Activated CD4-positive, alpha-beta T cell treated with anti-CD3 and anti-CD28 coated beads for 36 hours (primary cell): ENCODE measurements at regions of chr11 and their contacts with region 1.

Region 1: GRCh38 chr11:22703040-22703439 is 36.6 kb downstream of the GAS2 start:
- DNase-seq: peak; percentile 44
- ATAC-seq: peak; percentile 95
- H3K4me3 Mint-ChIP-seq: no peak overlapping the region
- H3K27ac Mint-ChIP-seq: peak overlapping the region; percentile 84
- H3K4me1 Mint-ChIP-seq: peaks cover 22% of the 10 kb centered on the region
- H3K27me3 Mint-ChIP-seq: peaks cover 4% of the 10 kb centered on the region

Region 2: DNA sequence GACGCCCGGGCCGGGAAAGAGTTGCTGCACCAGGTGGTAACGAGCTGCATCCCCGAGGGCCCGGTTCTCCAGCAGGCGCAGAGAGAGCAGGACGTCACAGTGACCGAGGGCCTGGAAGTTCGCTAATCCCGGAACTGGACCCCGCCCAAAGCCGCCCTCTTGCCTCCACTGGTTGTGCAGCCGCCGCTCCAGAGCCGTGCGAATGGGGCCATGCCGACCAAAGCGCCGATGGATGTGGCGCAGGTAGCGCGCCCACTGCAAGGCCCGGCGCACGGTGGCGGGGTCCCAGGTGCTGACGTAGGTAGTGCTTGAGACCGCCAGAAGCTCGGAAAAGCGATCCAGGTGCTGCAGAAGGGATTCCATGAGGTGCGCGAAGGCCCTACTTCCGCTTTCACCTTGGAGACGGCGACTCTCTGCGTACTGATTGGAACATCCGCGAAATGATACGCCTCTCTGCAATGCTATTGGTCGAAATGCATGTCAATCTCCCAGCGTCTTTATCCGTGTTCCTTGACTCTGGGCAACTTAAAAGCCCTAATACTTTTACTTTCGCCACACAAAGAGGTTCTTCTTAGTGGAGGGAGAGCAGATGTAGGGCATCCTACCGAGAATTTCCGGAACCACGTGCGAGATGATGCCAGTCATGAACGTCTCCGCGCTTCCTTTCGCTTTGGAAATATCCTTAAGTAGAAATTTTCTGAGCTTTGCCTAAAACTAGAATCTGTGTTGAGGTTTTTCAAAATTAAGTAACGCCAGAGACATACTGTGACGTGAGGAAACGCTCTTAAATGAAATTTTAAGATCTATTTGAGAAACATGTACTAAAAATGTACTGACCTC is 77.4 kb before region 1 on chr11 and contains the start of gene FANCF:
- CTCF ChIA-PET with region 1: no interaction called
- POLR2A ChIA-PET with region 1: no interaction called
- intact Hi-C with region 1: loop called in 1 of 2 experiments (anchors 1 kb)
- DNase-seq: peak; percentile 95
- ATAC-seq: peak; percentile 97
- H3K4me3 Mint-ChIP-seq: peak within 1 kb of the TSS; percentile 97
- H3K27ac Mint-ChIP-seq: peak within 1 kb of the TSS; percentile 98
- H3K4me1 Mint-ChIP-seq: peaks cover 33% of the 10 kb centered on the region
- H3K27me3 Mint-ChIP-seq: no peaks in the 10 kb centered on the region
- total RNA-seq, gene FANCF: 10.3 to 13.7 TPM

Region 3: DNA sequence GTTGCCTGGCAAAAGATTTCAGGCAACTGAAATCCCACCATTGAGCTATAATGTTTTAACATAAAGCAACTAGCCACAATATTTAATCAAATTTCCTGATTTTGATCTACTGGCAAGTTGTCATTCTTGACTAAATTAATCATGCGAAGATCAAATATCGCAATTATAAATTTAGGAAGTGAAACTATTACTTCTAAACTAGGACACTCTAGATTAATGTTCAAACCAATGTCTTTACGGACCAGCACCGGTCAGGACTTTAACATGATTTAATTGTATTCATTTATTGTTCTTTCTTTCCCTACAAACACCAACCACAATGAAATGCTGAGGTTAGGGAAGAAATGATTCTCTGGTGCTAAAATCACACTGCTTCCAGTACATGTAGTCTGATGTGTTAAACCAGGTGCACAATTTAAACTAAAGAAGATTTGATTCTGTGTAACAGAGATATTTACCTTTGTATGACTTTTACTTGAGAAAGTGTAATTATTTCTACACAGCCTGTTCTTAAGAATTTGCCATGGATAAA is 21.7 kb before region 1 on chr11:
- CTCF ChIA-PET with region 1: no interaction called
- POLR2A ChIA-PET with region 1: no interaction called
- intact Hi-C with region 1: no loop called
- DNase-seq: no peak
- ATAC-seq: no peak
- H3K4me3 Mint-ChIP-seq: no peak overlapping the region
- H3K27ac Mint-ChIP-seq: no peak overlapping the region
- H3K4me1 Mint-ChIP-seq: no peaks in the 10 kb centered on the region
- H3K27me3 Mint-ChIP-seq: peaks cover 10% of the 10 kb centered on the region

Region 4: DNA sequence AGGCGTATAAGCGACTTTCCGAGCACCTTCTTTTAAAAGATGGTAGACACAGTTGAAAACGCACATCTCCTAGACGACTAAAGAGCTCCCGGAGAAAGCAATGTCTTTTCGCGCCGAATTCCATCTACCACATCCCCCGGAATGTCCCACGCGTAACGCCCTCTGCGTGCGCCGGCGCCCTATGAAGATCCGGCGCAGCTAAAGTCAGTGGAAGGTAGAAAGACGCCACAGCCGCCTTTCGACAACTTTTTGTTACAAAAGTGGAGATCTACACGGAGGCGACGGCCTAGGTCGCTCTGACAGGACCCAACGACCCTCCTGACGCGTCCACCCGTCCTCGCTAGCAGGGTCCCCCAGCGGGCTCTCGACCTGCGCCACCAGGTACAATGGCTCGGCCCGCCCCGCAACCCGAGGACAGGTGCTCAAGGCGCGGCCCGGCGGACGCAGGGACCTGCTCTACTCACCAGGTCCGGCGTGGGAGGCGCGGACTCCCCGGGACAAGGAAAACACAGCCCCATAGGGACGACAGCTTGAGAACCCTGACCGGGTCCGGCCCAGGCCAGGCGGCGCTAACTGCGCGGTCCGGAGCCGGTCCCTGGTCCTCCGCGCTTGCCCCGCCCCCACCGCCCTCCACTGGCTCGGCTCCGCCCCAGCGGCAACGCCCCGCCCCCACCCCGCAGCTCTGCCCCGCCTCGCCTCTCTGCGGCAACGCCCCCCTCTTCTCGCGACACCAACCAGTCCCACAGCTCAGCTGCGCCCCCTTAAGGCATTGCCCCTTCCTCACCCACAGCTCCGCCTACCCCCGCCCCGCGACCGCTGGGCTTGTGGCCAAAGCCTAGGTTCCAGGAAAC is 126.4 kb after region 1 on chr11 and contains the start of gene SVIP:
- CTCF ChIA-PET with region 1: interaction called, 3 read pairs
- POLR2A ChIA-PET with region 1: no interaction called
- intact Hi-C with region 1: loop called in 1 of 2 experiments (anchors 2 kb)
- DNase-seq: peak; percentile 97
- ATAC-seq: peak; percentile 92
- H3K4me3 Mint-ChIP-seq: peak within 1 kb of the TSS; percentile 89
- H3K27ac Mint-ChIP-seq: peak within 1 kb of the TSS; percentile 85
- H3K4me1 Mint-ChIP-seq: peaks cover 12% of the 10 kb centered on the region
- H3K27me3 Mint-ChIP-seq: no peaks in the 10 kb centered on the region
- total RNA-seq, gene SVIP: 47.4 to 69.9 TPM